Activated CD8-positive, alpha-beta T cell treated with anti-CD3 and anti-CD28 coated beads, Interleukin-2, amount 10 ng/mL, durations not matched to agents 7 days and 5 days (primary cell): ENCODE measurements at regions of chr5 and their contacts with region 1.

Region 1: GRCh38 chr5:176388444-176389134 is at the starts of genes HIGD2A and NOP16:
- DNase-seq: peak; percentile 100
- ATAC-seq: peak; percentile 94
- H3K4me3 Mint-ChIP-seq: peak within 1 kb of the TSS; percentile 93
- H3K27ac Mint-ChIP-seq: peak within 1 kb of the TSS; percentile 99
- H3K4me1 Mint-ChIP-seq: peaks cover 38% of the 10 kb centered on the region
- H3K27me3 Mint-ChIP-seq: no peaks in the 10 kb centered on the region
- total RNA-seq, gene HIGD2A: 129 to 142 TPM
- total RNA-seq, gene NOP16: 44.5 to 46.3 TPM

Region 2: DNA sequence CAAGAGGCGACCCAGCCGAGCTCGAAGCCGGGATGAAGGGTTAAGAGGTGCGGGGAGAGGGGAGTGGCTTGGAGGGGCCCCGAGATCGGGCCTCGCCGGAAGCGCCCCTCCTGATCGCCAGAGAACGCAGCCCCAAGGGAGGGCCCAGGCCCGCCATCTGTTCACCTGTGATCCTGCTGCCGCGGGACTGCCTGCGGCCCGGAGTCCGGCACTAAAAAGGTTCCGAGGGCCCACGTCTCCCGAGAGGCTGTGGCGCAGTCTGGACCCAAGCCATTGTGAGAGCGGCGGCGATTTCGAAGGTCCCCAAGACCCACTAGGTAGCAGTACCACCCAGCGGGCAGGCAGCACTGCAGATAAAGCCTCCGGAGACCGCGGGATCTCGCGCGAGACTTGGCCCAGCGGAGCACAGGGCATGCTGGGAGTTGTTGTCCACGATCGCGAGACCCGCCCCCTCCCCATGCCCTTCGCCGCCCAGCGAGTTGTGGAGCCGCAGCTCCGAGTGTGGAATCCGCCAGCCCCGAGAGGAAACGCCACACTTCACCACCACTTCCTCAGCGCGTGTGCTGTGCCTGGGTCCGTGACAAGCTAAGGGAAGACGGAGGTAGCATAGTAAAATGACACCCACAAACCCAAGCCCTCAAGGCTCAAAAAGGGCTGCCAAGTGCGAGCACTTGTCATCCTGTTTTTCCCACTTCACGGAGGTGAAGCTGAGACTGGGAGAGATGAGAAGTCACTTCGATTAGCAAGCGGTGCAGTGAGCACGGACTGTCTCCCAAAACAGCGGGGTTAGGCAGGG is 27.0 kb before region 1 on chr5 and contains the start of gene KIAA1191:
- CTCF ChIA-PET with region 1: no interaction called
- POLR2A ChIA-PET with region 1: interaction called, 10 read pairs
- DNase-seq: peak; percentile 97
- ATAC-seq: peak; percentile 92
- H3K4me3 Mint-ChIP-seq: peak within 1 kb of the TSS; percentile 99
- H3K27ac Mint-ChIP-seq: peak within 1 kb of the TSS; percentile 99
- H3K4me1 Mint-ChIP-seq: peaks cover 42% of the 10 kb centered on the region
- H3K27me3 Mint-ChIP-seq: no peaks in the 10 kb centered on the region
- total RNA-seq, gene KIAA1191: 51.0 to 55.7 TPM

Region 3: GRCh38 chr5:176537608-176538504 is 149.3 kb after region 1 on chr5:
- CTCF ChIA-PET with region 1: no interaction called
- POLR2A ChIA-PET with region 1: interaction called, 10 read pairs
- DNase-seq: peak; percentile 100
- ATAC-seq: peak; percentile 77
- H3K4me3 Mint-ChIP-seq: peak overlapping the region; percentile 95
- H3K27ac Mint-ChIP-seq: peak overlapping the region; percentile 99
- H3K4me1 Mint-ChIP-seq: peaks cover 75% of the 10 kb centered on the region
- H3K27me3 Mint-ChIP-seq: no peaks in the 10 kb centered on the region